BJ (cell line): ENCODE measurements at regions of chr12 and their contacts with region 1.

Region 1: GRCh38 chr12:85448548-85449139 is 168.6 kb downstream of the ALX1 start:
- DNase-seq: no peak
- H3K4me3 ChIP-seq: no peak overlapping the region
- H3K27me3 ChIP-seq: no peaks in the 10 kb centered on the region
- CTCF ChIP-seq: peak; percentile 31

Region 2: DNA sequence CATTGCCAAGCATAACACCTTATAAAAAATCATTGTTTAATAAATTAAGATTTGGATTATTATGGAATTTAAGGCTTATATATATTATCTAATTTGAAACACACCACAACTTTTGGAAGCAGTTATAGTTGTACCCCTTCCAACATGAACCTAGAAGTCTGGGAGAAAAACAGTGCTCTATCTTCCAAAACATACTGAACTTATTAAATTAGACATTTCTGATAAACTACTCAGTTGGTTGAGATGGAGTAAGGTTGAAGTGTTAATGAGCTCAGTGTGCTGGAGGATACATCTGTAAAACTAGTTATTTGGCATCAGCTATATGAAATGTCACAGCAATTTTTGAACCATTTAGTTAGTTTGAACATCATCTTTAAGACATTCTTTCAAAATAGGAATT is 58.8 kb after region 1 on chr12:
- CTCF ChIA-PET with region 1: no interaction called
- POLR2A ChIA-PET with region 1: interaction called, 11 read pairs
- DNase-seq: no peak
- H3K4me3 ChIP-seq: no peak overlapping the region
- H3K27me3 ChIP-seq: no peaks in the 10 kb centered on the region
- CTCF ChIP-seq: no peak

Region 3: DNA sequence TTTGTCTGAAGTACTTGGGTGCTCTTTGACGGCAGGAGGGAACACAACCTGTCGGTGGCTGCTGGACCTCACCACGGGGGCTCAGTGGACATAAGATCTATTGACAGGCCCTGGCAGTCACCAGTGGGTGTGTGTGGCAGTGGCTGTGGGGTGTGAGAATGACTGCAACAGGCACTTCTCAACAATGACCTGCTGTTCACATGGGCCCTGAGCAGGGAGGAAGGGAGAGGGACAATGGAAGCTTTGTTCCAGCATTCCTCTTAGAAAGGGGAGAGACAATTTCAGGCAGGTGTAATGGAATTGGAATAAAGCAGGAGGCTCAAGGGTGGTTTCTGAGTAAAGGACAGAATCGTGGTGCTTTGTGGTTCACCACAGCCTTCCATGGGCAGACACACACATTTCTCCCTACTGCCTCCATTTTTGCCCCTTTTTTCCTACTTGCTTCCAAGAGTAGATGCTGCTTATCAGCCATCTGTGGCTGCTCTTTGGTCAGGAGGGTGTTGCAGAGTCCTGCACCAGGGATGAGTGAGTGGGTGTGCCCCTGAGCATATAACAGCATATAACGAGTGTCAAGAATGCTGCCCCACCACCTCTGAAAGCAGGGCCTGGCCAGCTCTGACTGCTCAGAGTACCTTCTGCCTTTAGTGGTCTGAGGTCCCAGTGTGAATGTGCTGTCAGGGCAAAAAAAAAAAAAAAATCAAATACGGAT is 119.9 kb after region 1 on chr12:
- CTCF ChIA-PET with region 1: no interaction called
- POLR2A ChIA-PET with region 1: no interaction called
- DNase-seq: no peak
- H3K4me3 ChIP-seq: no peak overlapping the region
- H3K27me3 ChIP-seq: no peaks in the 10 kb centered on the region
- CTCF ChIP-seq: no peak